ENCODE measurements at regions of chr7 and their contacts with region 1.

Region 1: GRCh38 chr7:80699045-80699638 is 60.7 kb downstream of the CD36 start:
- DNase-seq: no peak
- H3K4me3 ChIP-seq: no peak overlapping the region
- H3K27ac ChIP-seq: no peak overlapping the region
- H3K4me1 ChIP-seq: no peaks in the 10 kb centered on the region
- H3K27me3 ChIP-seq: peaks cover 4% of the 10 kb centered on the region
- CTCF ChIP-seq: peak; percentile 51 to 84 (median 76)
- POLR2A ChIP-seq: no peak

Region 2: DNA sequence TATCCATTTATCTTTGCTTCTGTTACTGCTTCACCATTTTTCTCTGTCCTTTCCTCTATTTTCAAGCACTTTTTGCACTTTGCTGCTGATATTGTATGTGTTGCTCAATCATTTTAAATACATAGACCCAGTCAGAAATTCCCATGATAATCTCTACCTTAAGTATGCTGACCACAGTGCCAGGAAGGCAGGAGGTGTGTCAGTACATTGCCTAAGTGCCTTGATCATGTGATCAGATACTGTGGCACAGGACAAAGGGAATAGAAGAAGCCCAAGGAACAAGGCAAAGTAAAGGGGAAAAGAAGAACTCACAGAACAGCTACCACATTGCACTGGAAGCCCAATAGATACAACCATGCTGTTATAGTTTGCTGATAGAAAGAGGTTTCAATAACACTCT is 114.4 kb before region 1 on chr7:
- intact Hi-C with region 1: no loop called
- DNase-seq: peak in 1 of 7 donors; percentile 17
- H3K4me3 ChIP-seq: no peak overlapping the region
- H3K27ac ChIP-seq: no peak overlapping the region
- H3K4me1 ChIP-seq: peaks cover 0 to 11% of the 10 kb centered on the region in 2 donors
- H3K27me3 ChIP-seq: no peaks in the 10 kb centered on the region
- CTCF ChIP-seq: no peak
- POLR2A ChIP-seq: no peak

Region 3: GRCh38 chr7:81457852-81458522 is 758.8 kb after region 1 on chr7:
- intact Hi-C with region 1: loop called in 1 of 2 experiments (anchors 5 kb)
- DNase-seq: no peak
- H3K4me3 ChIP-seq: no peak overlapping the region
- H3K27ac ChIP-seq: no peak overlapping the region
- H3K4me1 ChIP-seq: no peaks in the 10 kb centered on the region
- H3K27me3 ChIP-seq: no peaks in the 10 kb centered on the region
- CTCF ChIP-seq: peak in 3 of 6 experiments; percentile 13 to 41 (median 31)
- POLR2A ChIP-seq: no peak

Region 4: DNA sequence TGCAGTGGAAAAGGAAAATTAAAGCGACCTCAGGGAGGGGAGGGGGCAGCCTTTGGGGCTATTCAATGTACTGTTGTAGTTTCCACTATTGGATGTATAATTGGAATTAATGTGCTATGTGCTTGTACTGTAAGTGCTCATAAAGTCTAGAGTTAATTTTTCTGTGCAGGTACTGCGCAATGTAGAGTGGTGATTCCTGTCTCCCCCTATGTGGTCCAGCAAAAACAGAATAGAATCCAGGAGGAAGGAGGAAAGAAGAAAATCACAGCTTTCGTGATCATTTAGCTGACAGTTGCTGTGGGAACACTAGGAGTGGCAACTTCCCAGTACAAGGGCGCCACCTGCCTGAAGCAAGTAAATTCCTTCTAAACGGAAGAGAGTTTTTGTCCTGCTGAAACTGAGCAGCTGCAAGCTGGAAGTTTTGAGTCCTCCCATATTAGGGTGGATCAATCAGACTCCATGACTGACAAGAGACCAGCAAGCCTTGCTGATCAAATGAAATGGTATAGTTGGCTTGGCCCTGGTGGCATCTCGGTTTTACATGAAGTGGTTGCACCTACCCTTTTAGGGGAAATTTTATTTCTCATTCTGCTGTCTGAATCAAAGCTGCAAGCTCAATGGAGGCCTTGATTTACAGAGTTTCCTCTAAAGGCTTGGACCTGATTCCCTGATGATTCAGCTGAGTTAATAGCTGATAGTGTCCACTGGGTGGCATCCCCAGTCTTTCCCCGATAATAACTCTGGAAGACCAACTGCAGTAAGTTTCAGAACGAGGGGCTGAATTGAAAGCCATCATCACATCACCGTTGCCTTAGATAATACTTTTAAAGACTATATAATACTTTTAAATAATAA is 771.0 kb after region 1 on chr7:
- intact Hi-C with region 1: loop called in 1 of 2 experiments (anchors 5 kb)
- DNase-seq: peak; percentile 62 to 77 (median 71)
- H3K4me3 ChIP-seq: no peak overlapping the region
- H3K27ac ChIP-seq: no peak overlapping the region
- H3K4me1 ChIP-seq: no peaks in the 10 kb centered on the region
- H3K27me3 ChIP-seq: no peaks in the 10 kb centered on the region
- CTCF ChIP-seq: peak; percentile 49 to 72 (median 60)
- POLR2A ChIP-seq: no peak